Activated CD4-positive, alpha-beta T cell treated with anti-CD3 and anti-CD28 coated beads for 36 hours (primary cell): ENCODE measurements at regions of chr17 and their contacts with region 1.

Region 1: DNA sequence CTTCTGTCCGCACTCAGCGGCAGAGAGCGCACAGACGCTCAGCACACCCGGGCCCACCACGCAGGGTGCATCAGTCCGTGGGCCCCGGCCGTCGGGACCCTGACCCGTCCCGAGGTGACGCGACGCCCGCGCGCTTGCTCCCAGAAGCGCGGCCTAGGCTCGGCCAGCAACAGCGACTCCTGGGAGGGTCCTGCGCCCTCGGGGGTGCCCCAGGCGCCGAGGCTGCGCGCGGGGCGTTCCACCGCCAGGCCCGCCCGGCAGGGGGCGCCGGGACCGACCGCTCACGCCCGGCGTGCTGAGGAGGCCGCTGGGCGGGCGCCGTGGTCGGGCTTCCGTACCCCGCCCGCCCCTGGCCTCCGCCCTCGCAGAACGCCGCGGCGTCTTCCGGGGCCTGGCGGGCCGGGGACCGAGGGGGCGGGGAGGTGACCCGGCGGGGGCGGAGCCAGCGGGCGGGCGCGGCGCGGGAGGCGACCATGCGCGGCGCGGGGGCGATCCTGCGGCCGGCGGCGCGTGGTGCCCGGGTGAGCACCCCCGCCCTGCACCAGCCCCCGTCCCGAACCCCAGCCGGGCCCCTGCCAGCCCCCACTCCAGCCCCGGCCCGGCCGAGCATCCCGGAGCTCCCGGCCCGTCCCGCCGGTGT is at the start of gene CISD3:
- DNase-seq: peak; percentile 92
- ATAC-seq: peak; percentile 66
- H3K4me3 Mint-ChIP-seq: peak within 1 kb of the TSS; percentile 91
- H3K27ac Mint-ChIP-seq: peak within 1 kb of the TSS; percentile 100
- H3K4me1 Mint-ChIP-seq: peaks cover 81% of the 10 kb centered on the region
- H3K27me3 Mint-ChIP-seq: no peaks in the 10 kb centered on the region
- total RNA-seq, gene CISD3: 49.4 to 58.6 TPM

Region 2: GRCh38 chr17:38428112-38428642 is 301.8 kb before region 1 on chr17 and contains the start of gene ARHGAP23:
- CTCF ChIA-PET with region 1: interaction called, 3 read pairs
- POLR2A ChIA-PET with region 1: no interaction called
- intact Hi-C with region 1: loop called in 1 of 2 experiments (anchors 10 kb)
- DNase-seq: peak; percentile 59
- ATAC-seq: peak; percentile 45
- H3K4me3 Mint-ChIP-seq: peak within 1 kb of the TSS; percentile 69
- H3K27ac Mint-ChIP-seq: no peak within 1 kb of the TSS
- H3K4me1 Mint-ChIP-seq: peaks cover 9% of the 10 kb centered on the region
- H3K27me3 Mint-ChIP-seq: peaks cover 14% of the 10 kb centered on the region
- total RNA-seq, gene ARHGAP23: 0.55 to 0.86 TPM

Region 3: GRCh38 chr17:38605888-38606645 is 123.9 kb before region 1 on chr17 and contains the start of gene SRCIN1:
- CTCF ChIA-PET with region 1: no interaction called
- POLR2A ChIA-PET with region 1: no interaction called
- intact Hi-C with region 1: loop called (anchors 2 to 10 kb)
- DNase-seq: peak; percentile 79
- ATAC-seq: peak; percentile 42
- H3K4me3 Mint-ChIP-seq: peak within 1 kb of the TSS; percentile 66
- H3K27ac Mint-ChIP-seq: no peak within 1 kb of the TSS
- H3K4me1 Mint-ChIP-seq: peaks cover 16% of the 10 kb centered on the region
- H3K27me3 Mint-ChIP-seq: peaks cover 56% of the 10 kb centered on the region
- total RNA-seq, gene SRCIN1: 0.72 to 0.73 TPM

Region 4: GRCh38 chr17:40157973-40158372 is 1428.0 kb after region 1 on chr17:
- CTCF ChIA-PET with region 1: no interaction called
- POLR2A ChIA-PET with region 1: no interaction called
- intact Hi-C with region 1: loop called in 1 of 2 experiments (anchors 5 kb)
- DNase-seq: no peak
- ATAC-seq: no peak
- H3K4me3 Mint-ChIP-seq: no peak overlapping the region
- H3K27ac Mint-ChIP-seq: peak overlapping the region; percentile 24
- H3K4me1 Mint-ChIP-seq: peaks cover 35% of the 10 kb centered on the region
- H3K27me3 Mint-ChIP-seq: no peaks in the 10 kb centered on the region